CD8-positive, alpha-beta T cell (primary cell): ENCODE measurements at regions of chr16 and their contacts with region 1.

Region 1: DNA sequence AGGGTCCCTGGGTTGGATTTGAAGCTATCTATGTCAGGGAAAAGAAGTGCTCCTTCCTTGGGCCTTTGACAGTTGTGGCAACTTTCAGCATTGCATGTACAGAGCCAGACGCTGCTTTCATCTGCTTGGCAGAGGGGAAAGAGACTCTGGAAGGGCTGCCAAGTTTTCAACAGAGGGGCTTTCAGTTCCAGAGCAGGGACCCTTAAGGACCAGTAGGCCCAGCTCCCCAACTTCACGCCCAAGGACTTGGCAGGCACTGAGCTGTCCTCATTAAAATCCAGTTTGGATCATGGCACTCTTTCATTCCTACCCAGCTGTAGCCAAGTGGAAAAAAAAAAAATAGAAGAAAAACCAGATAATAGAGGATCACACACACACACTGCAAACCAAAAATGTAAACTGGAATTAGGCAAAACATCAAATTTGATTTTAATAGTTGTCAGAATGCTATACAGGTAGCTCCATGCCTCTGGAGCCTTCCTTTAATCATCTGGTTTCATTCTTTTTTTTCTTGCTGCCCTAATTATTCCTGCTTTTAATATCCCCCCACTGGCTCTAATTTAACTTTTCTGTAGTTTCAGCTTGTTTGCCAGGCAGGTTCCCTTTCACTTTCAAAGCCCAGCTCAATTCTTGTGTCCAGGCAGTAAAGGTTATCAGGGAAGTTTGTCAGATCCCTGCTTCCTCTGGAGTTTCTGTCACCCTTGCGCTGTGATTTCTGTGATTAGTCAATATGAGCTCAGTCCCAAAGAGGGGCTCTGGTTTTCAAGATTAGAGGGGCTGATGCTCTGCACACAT is 702.6 kb upstream of the CDH8 start:
- DNase-seq: no peak
- ATAC-seq: no peak
- H3K4me3 ChIP-seq: no peak overlapping the region
- H3K4me3 Mint-ChIP-seq: no peak overlapping the region
- H3K27ac ChIP-seq: no peak overlapping the region
- H3K27ac Mint-ChIP-seq: no peak overlapping the region
- H3K4me1 ChIP-seq: no peaks in the 10 kb centered on the region
- H3K4me1 Mint-ChIP-seq: no peaks in the 10 kb centered on the region
- H3K27me3 ChIP-seq: no peaks in the 10 kb centered on the region
- H3K27me3 Mint-ChIP-seq: no peaks in the 10 kb centered on the region
- CTCF ChIP-seq: no peak

Region 2: GRCh38 chr16:62665269-62665668 is 73.6 kb before region 1 on chr16:
- CTCF ChIA-PET with region 1: no interaction called
- POLR2A ChIA-PET with region 1: no interaction called
- intact Hi-C with region 1: no loop called
- DNase-seq: no peak
- ATAC-seq: no peak
- H3K4me3 ChIP-seq: no peak overlapping the region
- H3K4me3 Mint-ChIP-seq: no peak overlapping the region
- H3K27ac ChIP-seq: no peak overlapping the region
- H3K27ac Mint-ChIP-seq: no peak overlapping the region
- H3K4me1 ChIP-seq: no peaks in the 10 kb centered on the region
- H3K4me1 Mint-ChIP-seq: no peaks in the 10 kb centered on the region
- H3K27me3 ChIP-seq: no peaks in the 10 kb centered on the region
- H3K27me3 Mint-ChIP-seq: no peaks in the 10 kb centered on the region
- CTCF ChIP-seq: no peak

Region 3: DNA sequence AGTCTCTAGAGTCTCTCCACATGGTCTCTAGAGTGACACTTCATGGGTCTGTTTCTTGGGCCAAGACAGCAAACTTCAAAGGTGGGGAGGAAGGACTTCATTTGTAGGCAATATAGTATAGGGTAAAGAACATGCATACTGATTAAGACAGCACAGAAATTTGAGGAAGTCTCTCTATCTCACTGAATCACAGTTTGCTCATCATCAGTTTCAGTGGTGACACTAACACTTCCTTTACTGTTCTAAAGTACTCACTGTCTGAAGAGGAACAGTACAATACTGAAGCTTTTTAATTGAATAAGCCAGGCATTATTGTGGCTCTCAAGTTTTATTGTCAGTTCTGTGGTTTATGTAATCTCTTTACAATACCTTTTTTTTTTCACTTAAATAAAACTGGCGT is 46.2 kb before region 1 on chr16:
- CTCF ChIA-PET with region 1: no interaction called
- POLR2A ChIA-PET with region 1: no interaction called
- intact Hi-C with region 1: loop called in 1 of 2 experiments (anchors 1 kb)
- DNase-seq: no peak
- ATAC-seq: no peak
- H3K4me3 ChIP-seq: no peak overlapping the region
- H3K4me3 Mint-ChIP-seq: no peak overlapping the region
- H3K27ac ChIP-seq: no peak overlapping the region
- H3K27ac Mint-ChIP-seq: no peak overlapping the region
- H3K4me1 ChIP-seq: no peaks in the 10 kb centered on the region
- H3K4me1 Mint-ChIP-seq: no peaks in the 10 kb centered on the region
- H3K27me3 ChIP-seq: no peaks in the 10 kb centered on the region
- H3K27me3 Mint-ChIP-seq: no peaks in the 10 kb centered on the region
- CTCF ChIP-seq: no peak

Region 4: DNA sequence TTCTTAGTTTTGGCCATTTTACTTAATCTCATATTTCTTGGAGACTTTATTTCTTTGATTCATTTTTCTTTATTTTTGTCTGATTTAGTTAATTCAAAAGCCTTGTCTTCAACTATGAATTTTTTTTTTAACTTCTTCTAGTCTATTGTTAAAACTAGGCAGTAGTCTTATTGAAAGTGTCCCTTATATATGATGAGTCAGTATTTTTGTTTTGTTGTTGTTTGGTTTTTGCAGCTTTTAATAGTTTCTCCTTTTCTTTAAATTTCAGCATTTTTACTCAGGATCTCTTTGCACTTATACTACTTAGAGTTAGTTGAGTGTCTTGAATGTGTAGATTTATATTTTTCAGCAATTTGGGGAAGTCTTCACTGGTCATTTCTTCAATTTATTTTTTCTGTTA is 55.9 kb after region 1 on chr16:
- CTCF ChIA-PET with region 1: no interaction called
- POLR2A ChIA-PET with region 1: no interaction called
- intact Hi-C with region 1: loop called in 1 of 2 experiments (anchors 10 kb)
- DNase-seq: no peak
- ATAC-seq: no peak
- H3K4me3 ChIP-seq: no peak overlapping the region
- H3K4me3 Mint-ChIP-seq: no peak overlapping the region
- H3K27ac ChIP-seq: no peak overlapping the region
- H3K27ac Mint-ChIP-seq: no peak overlapping the region
- H3K4me1 ChIP-seq: no peaks in the 10 kb centered on the region
- H3K4me1 Mint-ChIP-seq: no peaks in the 10 kb centered on the region
- H3K27me3 ChIP-seq: no peaks in the 10 kb centered on the region
- H3K27me3 Mint-ChIP-seq: no peaks in the 10 kb centered on the region
- CTCF ChIP-seq: no peak